ENCODE measurements at regions of chr2 and their contacts with region 1.

Region 1: DNA sequence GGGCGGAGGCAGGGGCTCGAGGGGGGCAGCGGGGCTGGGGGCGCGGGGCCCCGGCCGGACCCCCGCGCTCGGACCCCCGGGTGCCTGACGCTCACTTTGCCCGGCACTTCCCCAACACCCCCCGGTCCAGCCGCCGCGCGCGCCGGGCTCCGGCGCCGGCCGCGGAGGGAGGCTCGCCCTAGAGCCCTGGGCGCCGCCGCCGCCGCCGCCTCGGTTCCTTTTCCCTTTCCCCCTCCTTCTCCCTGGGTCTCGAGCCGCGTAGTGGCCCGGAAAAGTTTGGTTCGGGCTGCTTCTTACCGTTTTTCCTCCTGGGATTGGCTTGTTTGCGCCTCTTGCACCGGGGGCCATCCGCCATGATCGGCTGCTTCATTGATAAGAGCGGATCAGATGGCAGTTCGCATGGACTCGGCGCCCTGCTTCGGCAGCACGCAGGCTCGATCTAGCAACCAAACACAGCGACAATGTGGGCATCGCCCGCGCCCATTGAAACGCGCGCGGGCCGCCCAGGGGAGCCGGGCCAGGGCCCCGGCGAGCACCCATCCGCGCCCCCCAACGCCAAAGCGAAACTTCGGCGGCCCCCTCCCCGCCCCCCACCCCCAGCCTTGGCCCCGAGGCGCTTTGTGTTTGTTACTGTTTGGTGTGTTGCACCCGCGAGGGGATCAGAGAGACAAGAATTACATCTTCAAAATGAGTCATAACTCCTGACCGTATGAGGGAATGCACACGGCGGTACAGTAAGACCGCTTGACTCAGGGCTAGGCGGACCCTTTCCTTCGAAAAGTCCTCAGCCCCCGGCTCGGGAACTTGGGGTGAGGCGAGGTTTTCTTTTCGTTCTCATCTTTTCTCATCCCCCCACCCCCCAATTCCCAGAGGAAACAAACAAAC is 2.7 kb downstream of the ZEB2 start:
- DNase-seq: peak; percentile 76
- ATAC-seq: peak; percentile 80
- H3K4me3 Mint-ChIP-seq: no peak overlapping the region
- H3K27ac Mint-ChIP-seq: peak overlapping the region; percentile 96
- H3K4me1 Mint-ChIP-seq: peaks cover 17% of the 10 kb centered on the region
- H3K27me3 Mint-ChIP-seq: peaks cover 44% of the 10 kb centered on the region

Region 2: DNA sequence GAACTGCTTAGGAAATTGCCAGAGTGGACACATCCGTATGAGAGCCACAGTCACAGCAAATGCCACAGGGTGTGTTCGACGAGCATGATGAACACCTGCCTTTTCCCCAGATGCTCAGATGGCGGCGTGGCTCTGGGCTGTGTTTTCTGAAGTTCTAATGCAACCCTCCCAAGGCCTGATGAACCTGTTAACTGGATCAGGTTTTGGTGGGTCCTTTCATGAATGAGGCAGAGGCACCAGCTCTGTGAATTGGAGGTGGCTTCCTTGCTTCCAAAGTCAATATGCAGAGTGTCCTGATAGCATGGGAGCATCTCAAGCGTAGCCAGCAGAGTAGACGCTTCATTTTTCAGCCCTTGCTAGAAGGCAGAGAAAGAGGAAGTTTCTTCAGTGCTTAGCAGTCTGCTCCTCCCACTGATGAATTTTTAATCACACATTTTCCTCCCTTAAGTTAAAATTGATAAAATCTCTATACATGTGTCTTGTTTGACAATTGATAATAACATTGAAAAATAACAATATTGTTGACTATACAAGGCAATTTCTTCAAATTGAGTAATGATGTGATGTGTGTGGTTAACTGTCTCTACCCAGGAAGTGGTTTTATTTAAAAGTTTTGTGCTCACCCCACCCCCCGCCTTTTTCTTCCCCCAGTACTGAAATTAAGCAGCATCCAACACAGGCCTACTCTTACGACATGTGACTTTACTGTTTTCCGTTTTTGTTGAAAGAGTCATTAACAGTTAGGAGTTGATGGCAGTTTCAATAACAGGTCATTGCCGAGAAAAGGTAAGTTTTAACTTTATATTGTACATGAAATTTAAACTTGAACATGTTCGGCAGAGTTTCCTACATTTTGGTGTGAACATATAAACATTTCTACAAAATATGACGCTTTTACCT is 1388.3 kb before region 1 on chr2 and contains the start of gene ARHGAP15:
- CTCF ChIA-PET with region 1: no interaction called
- POLR2A ChIA-PET with region 1: no interaction called
- intact Hi-C with region 1: loop called (anchors 5 to 10 kb)
- DNase-seq: peak; percentile 83
- ATAC-seq: peak; percentile 81
- H3K4me3 Mint-ChIP-seq: peak within 1 kb of the TSS; percentile 71
- H3K27ac Mint-ChIP-seq: peak within 1 kb of the TSS; percentile 99
- H3K4me1 Mint-ChIP-seq: peaks cover 34% of the 10 kb centered on the region
- H3K27me3 Mint-ChIP-seq: no peaks in the 10 kb centered on the region
- total RNA-seq, gene ARHGAP15: 62.6 to 64.3 TPM

Region 3: GRCh38 chr2:143936848-143937722 is 580.1 kb before region 1 on chr2:
- CTCF ChIA-PET with region 1: no interaction called
- POLR2A ChIA-PET with region 1: no interaction called
- intact Hi-C with region 1: loop called in 1 of 2 experiments (anchors 5 kb)
- DNase-seq: peak; percentile 54
- ATAC-seq: peak; percentile 73
- H3K4me3 Mint-ChIP-seq: peak overlapping the region; percentile 57
- H3K27ac Mint-ChIP-seq: no peak overlapping the region
- H3K4me1 Mint-ChIP-seq: peaks cover 13% of the 10 kb centered on the region
- H3K27me3 Mint-ChIP-seq: peaks cover 53% of the 10 kb centered on the region

Region 4: DNA sequence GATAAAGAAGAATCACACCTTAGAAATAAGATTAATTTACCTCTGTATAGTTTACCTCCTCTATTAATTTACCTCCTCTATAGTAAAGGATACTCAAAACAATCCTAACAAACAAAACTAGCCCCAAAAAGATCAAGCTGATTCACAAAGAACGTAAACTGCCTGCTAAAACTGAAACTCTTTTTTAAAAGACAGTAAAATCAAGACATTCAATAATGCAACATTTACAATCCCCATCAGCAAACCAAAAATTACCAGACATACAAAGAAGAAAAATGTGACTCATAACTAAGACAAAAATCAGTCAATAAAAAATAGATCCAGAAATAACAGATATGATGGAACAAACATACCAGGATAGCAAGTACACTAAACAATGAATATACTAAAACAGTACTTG is 213.0 kb before region 1 on chr2:
- CTCF ChIA-PET with region 1: no interaction called
- POLR2A ChIA-PET with region 1: interaction called, 10 read pairs
- intact Hi-C with region 1: no loop called
- DNase-seq: no peak
- ATAC-seq: peak; percentile 57
- H3K4me3 Mint-ChIP-seq: no peak overlapping the region
- H3K27ac Mint-ChIP-seq: no peak overlapping the region
- H3K4me1 Mint-ChIP-seq: peaks cover 11% of the 10 kb centered on the region
- H3K27me3 Mint-ChIP-seq: no peaks in the 10 kb centered on the region

Region 5: GRCh38 chr2:144332356-144333142 is 184.7 kb before region 1 on chr2:
- CTCF ChIA-PET with region 1: no interaction called
- POLR2A ChIA-PET with region 1: no interaction called
- intact Hi-C with region 1: loop called (anchors 1 to 2 kb)
- DNase-seq: peak; percentile 94
- ATAC-seq: peak; percentile 88
- H3K4me3 Mint-ChIP-seq: peak overlapping the region; percentile 93
- H3K27ac Mint-ChIP-seq: peak overlapping the region; percentile 88
- H3K4me1 Mint-ChIP-seq: peaks cover 32% of the 10 kb centered on the region
- H3K27me3 Mint-ChIP-seq: peaks cover 2% of the 10 kb centered on the region

Region 6: DNA sequence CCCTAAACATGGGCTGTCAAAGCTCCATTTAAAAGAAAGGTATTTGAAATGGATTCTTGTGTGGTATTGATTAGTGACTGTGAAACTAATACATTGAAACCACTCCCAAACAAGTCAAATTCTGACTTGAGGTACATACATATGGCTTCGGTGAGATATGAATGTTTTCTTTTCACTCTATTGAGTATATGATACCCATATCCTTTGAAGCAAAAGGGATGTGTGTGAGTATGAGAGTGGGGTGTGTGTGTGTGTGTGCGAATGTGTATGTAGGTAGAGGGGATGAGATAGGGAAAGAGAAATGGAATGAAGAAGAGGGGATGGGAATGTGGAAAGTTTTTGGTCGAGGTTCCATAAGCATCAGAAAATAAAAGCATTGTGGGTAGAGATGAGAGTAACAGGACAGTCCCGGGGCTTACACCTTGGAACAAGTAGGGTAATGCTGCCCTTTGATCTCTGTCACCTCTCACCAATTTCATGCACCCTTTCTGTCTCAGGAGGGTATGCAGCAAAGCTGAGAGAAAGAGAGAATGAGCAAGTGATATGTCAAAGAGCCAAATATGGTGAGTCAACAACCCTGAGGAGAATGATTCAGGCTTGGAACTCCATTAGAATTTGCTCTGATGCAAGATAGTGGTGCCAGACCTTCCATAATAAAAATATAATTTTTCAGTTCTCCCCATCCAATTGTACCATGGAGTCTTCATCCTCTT is 66.7 kb after region 1 on chr2:
- CTCF ChIA-PET with region 1: interaction called, 4 read pairs
- POLR2A ChIA-PET with region 1: no interaction called
- intact Hi-C with region 1: loop called in 1 of 2 experiments (anchors 5 kb)
- DNase-seq: peak; percentile 18
- ATAC-seq: peak; percentile 88
- H3K4me3 Mint-ChIP-seq: peak overlapping the region; percentile 1
- H3K27ac Mint-ChIP-seq: peak overlapping the region; percentile 77
- H3K4me1 Mint-ChIP-seq: peaks cover 22% of the 10 kb centered on the region
- H3K27me3 Mint-ChIP-seq: peaks cover 23% of the 10 kb centered on the region